A673 (cell line): ENCODE measurements at regions of chr2 and their contacts with region 1.

Region 1: GRCh38 chr2:1910592-1911246 is 166.4 kb upstream of the PXDN start:
- DNase-seq: peak; percentile 39
- H3K4me3 ChIP-seq: no peak overlapping the region
- H3K27ac ChIP-seq: no peak overlapping the region
- H3K4me1 ChIP-seq: no peaks in the 10 kb centered on the region
- H3K27me3 ChIP-seq: no peaks in the 10 kb centered on the region
- CTCF ChIP-seq: peak; percentile 61

Region 2: GRCh38 chr2:1400943-1401735 is 509.6 kb before region 1 on chr2:
- CTCF ChIA-PET with region 1: no interaction called
- POLR2A ChIA-PET with region 1: no interaction called
- intact Hi-C with region 1: no loop called
- DNase-seq: no peak
- H3K4me3 ChIP-seq: no peak overlapping the region
- H3K27ac ChIP-seq: no peak overlapping the region
- H3K4me1 ChIP-seq: no peaks in the 10 kb centered on the region
- H3K27me3 ChIP-seq: no peaks in the 10 kb centered on the region
- CTCF ChIP-seq: no peak

Region 3: GRCh38 chr2:1665745-1666505 is 244.8 kb before region 1 on chr2:
- CTCF ChIA-PET with region 1: no interaction called
- POLR2A ChIA-PET with region 1: no interaction called
- intact Hi-C with region 1: no loop called
- DNase-seq: no peak
- H3K4me3 ChIP-seq: no peak overlapping the region
- H3K27ac ChIP-seq: no peak overlapping the region
- H3K4me1 ChIP-seq: no peaks in the 10 kb centered on the region
- H3K27me3 ChIP-seq: no peaks in the 10 kb centered on the region
- CTCF ChIP-seq: no peak

Region 4: GRCh38 chr2:2101924-2102323 is 191.2 kb after region 1 on chr2:
- CTCF ChIA-PET with region 1: no interaction called
- POLR2A ChIA-PET with region 1: no interaction called
- intact Hi-C with region 1: loop called (anchors 10 kb)
- DNase-seq: peak; percentile 56
- H3K4me3 ChIP-seq: no peak overlapping the region
- H3K27ac ChIP-seq: no peak overlapping the region
- H3K4me1 ChIP-seq: no peaks in the 10 kb centered on the region
- H3K27me3 ChIP-seq: no peaks in the 10 kb centered on the region
- CTCF ChIP-seq: peak; percentile 59

Region 5: DNA sequence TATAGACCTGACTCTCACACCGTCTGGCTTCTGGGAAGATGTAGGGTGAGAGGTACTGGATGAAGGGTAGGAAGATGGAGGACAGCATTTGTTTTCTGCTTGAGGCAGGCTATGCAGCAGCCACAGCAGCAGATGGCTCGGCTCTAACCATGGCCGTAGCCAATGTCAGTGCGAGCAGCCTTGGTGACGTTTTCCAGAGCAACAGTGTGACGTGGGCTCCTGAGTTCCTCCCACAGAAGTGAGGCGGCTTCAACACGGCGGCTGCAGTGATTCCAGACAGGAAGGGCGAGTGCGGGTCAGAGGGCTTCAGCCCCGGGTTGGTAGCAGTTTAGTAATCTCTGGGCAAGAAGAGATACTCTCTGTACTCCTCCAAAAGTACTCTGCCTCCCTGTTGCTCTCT is 553.4 kb after region 1 on chr2:
- CTCF ChIA-PET with region 1: no interaction called
- POLR2A ChIA-PET with region 1: no interaction called
- intact Hi-C with region 1: no loop called
- DNase-seq: peak; percentile 4
- H3K4me3 ChIP-seq: no peak overlapping the region
- H3K27ac ChIP-seq: no peak overlapping the region
- H3K4me1 ChIP-seq: no peaks in the 10 kb centered on the region
- H3K27me3 ChIP-seq: peaks cover 21% of the 10 kb centered on the region
- CTCF ChIP-seq: no peak